Dendritic cell treated with granulocyte-macrophage colony-stimulating factor and Interleukin-4, amounts not matched to agents 40 ng/mL and 50 ng/mL, for 4 days (primary cell): ENCODE measurements at regions of chr10 and their contacts with region 1.

Region 1: DNA sequence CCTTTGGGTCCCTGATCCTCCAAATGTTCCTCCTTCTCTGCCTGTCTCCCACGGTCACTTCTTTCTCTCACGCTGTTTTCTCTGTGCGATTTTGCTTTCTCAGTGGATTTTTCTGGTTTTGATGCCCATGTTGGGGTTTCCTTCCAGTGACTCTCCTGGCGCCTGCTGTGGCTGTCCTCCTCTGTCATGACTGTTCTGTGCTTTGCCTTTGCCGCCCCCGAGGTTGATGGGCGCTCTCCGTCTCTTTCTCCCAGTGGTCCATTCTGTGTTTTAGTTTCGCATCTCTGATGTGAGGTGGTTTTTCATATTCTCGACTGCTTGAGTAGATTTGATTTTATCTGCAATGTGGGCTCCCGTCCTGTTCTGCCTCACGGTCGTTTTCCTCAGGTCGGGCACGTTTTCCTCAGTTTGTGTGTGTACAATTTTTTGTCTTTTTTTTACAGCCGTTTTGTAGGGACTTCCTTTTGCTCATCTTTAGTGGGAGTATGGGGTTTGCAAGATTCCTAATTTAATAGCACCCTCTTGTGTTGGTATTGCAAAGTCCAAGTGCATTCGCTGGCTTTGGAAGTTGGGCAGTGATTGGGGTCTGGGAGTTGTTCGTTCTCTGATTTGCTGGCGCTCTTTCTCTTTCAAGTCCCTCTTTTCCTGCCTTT is 100.0 kb downstream of the INPP5A start:
- H3K4me3 Mint-ChIP-seq: no peak overlapping the region
- H3K27ac Mint-ChIP-seq: no peak overlapping the region
- H3K4me1 Mint-ChIP-seq: peaks cover 21% of the 10 kb centered on the region
- H3K27me3 Mint-ChIP-seq: peaks cover 2% of the 10 kb centered on the region

Region 2: DNA sequence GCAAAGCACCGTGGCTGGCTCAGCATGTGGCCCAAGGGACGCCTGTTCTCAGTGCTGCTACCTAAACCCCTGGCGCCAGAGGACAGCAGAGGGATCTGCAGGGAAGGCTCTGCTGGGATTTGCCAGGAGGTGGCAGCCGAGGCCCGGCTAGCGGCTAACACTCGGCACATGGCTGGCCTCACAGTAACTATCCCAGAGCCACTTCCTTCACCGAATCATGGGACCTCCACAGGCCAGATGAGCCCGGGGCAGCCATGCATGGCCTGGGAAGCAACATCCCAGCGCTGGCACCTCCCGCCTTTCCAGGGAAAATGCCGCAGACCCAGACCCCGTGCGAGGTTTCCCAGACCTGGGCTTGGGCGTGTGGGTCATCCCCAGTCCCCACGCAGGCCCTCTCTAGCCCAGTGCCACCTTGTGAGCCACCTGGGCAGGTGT is 414.4 kb before region 1 on chr10:
- intact Hi-C with region 1: loop called (anchors 10 kb)
- H3K4me3 Mint-ChIP-seq: peak overlapping the region; percentile 52
- H3K27ac Mint-ChIP-seq: peak overlapping the region; percentile 82
- H3K4me1 Mint-ChIP-seq: peaks cover 6% of the 10 kb centered on the region
- H3K27me3 Mint-ChIP-seq: no peaks in the 10 kb centered on the region

Region 3: DNA sequence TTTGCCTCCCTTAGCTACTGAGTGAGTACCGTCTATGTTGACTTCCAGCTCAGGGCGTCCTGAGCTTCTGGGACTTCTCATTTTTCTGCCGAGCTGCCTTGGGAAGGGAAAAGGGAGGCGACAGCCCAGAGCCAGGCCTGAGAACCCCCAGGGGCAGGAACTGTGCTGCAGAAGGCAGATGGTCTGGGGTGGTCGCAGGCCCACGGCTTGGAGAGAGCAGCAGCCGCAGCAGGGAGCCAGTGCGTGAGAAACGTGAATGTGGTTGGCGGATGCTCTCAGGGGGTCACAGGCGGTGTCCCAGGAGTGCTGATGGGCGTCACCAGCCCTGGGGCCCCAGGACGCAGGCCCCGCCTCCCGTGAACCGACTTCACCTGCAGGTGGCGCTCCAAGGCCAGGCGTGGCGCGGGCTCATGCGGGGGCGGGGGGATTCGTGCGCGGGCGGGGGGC is 249.8 kb before region 1 on chr10:
- intact Hi-C with region 1: loop called (anchors 10 kb)
- H3K4me3 Mint-ChIP-seq: peak overlapping the region; percentile 66
- H3K27ac Mint-ChIP-seq: peak overlapping the region; percentile 88
- H3K4me1 Mint-ChIP-seq: peaks cover 49% of the 10 kb centered on the region
- H3K27me3 Mint-ChIP-seq: peaks cover 35% of the 10 kb centered on the region

Region 4: DNA sequence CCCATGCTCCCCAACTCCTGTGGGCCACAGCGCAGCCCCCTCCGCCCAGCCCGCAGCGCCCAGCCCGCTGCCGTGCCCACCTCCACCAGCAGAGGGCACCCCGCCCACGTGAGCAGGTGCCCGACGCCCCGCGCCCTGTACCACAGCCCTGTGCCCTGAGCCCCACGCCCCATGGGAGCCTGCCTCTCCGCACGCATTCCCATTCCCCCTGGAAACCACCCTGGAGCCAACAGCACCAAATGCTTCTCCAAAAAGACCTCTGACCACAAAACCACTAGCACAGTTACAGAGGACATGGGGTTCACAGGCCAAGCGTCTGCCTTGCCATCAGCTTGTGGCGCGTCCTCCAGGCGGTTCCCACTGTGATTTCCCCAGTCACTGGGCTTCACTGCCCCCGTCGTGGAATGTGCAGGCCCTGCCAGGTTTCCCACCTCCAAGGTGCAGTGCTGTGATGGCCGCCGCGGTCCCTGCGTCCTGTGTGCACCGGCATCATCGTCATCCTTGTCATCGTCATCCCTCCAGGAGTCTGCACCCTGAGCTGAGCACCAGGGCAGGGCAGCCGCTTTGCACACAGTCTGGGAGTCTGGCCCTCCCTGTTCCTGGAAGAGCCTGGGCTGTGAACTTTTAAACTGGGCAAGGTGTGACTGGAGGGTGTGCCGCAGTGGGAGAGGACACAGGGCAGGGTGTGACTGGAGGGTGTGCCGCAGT is 178.9 kb before region 1 on chr10:
- intact Hi-C with region 1: loop called (anchors 1 kb)
- H3K4me3 Mint-ChIP-seq: no peak overlapping the region
- H3K27ac Mint-ChIP-seq: no peak overlapping the region
- H3K4me1 Mint-ChIP-seq: peaks cover 7% of the 10 kb centered on the region
- H3K27me3 Mint-ChIP-seq: peaks cover 33% of the 10 kb centered on the region